ENCODE measurements at regions of chr1 and their contacts with region 1.

Region 1: DNA sequence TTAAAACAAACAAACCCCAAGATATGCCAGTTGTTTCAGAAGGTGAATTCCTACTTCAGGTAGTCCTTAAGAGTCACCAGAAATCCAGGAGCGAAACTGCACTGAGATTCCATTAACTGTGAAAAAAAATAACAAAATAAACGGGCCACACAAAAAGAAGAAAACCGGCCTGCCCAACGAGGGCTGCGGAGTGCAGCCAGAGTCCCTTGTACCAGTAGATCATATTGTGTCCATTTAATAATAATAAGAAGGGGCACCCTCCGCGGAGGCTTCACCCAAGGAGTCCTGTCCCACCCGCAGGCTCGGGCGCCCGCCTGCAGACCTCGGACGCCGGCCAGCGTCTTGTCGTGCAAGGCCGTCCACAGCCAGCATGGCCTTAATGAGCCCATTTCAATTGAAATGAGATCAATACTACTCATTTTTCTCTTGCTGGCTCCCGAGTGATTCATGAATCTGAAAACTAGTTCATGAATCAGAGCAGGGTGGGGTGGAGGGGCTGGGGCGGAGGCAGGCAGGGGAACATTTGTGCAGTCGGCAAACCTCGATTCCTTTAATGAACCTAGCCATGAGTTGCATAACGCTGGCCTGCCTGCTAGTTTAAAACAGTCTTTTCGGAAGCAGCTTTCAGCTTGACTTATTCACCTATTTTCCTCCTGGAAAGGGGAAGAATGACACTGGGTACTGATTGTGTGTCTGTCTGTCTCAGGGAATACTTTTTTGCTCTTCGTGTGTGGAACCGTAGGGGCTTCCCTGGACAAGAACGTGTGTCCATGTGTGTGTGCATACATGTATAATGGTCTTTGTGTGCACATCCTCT is 113.1 kb upstream of the IRF2BP2 start:
- DNase-seq: peak; percentile 89 to 91
- H3K4me3 ChIP-seq: peak overlapping the region in 1 of 2 donors; percentile 35
- H3K27ac ChIP-seq: peak overlapping the region; percentile 81 to 87
- H3K4me1 ChIP-seq: peaks cover 0 to 93% (median 82%) of the 10 kb centered on the region in 4 donors
- H3K27me3 ChIP-seq: no peaks in the 10 kb centered on the region
- CTCF ChIP-seq: no peak

Region 2: GRCh38 chr1:234533975-234534876 is 188.9 kb before region 1 on chr1:
- intact Hi-C with region 1: loop called (anchors 5 kb)
- DNase-seq: peak; percentile 99
- H3K4me3 ChIP-seq: no peak overlapping the region
- H3K27ac ChIP-seq: peak overlapping the region; percentile 98 to 99
- H3K4me1 ChIP-seq: peaks cover 16 to 99% (median 89%) of the 10 kb centered on the region in 4 donors
- H3K27me3 ChIP-seq: no peaks in the 10 kb centered on the region
- CTCF ChIP-seq: no peak

Region 3: DNA sequence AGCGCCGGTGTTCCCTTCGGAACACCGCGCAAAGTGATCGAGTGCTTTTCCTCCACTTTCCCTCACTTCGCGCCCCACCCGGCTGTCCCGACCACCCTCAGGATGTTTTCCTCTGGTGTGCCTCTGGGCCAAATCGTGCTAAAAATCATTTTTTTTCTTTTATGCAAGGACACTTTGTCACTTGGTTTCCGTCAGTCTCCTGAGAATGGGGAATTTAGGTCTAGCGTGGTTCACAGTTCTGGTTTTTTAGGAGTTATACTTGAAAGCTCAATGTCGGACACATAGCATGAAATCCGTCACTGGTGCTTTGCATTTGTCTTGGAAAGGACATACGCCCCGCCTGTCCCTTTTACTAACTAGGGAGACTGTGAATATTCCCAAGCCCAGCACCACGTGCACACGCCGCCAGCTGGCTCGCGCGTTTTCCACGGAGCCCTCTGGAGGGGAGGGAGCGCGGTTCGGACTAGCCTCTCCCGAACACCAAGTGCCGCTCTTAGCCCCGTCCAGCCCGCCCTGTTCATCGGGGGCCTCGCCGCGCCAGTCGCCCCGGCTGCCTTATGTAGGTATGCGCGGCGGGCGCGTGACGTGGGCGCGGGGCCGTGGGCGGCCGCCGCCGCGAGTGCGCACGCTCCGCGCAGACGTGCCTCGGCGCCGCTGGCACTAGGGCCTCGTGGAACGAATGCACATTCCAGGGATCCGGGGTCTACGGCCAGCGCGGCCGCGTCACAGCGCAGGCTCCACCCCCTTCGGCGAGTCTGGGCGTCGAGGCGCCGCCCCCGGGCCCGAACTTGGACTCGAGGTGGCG is 112.6 kb before region 1 on chr1:
- intact Hi-C with region 1: loop called (anchors 5 kb)
- DNase-seq: peak; percentile 91 to 98
- H3K4me3 ChIP-seq: peak overlapping the region; percentile 62 to 94
- H3K27ac ChIP-seq: peak overlapping the region; percentile 96 to 98
- H3K4me1 ChIP-seq: peaks cover 0 to 46% (median 29%) of the 10 kb centered on the region in 4 donors
- H3K27me3 ChIP-seq: no peaks in the 10 kb centered on the region
- CTCF ChIP-seq: peak; percentile 6 to 13

Region 4: GRCh38 chr1:234676103-234676594 is 47.0 kb before region 1 on chr1:
- intact Hi-C with region 1: no loop called
- DNase-seq: peak; percentile 80 to 86
- H3K4me3 ChIP-seq: peak overlapping the region; percentile 34 to 44
- H3K27ac ChIP-seq: peak overlapping the region; percentile 54 to 55
- H3K4me1 ChIP-seq: peaks cover 0 to 10% (median 0%) of the 10 kb centered on the region in 4 donors
- H3K27me3 ChIP-seq: no peaks in the 10 kb centered on the region
- CTCF ChIP-seq: no peak

Region 5: GRCh38 chr1:234772345-234773147 is 49.4 kb after region 1 on chr1:
- intact Hi-C with region 1: no loop called
- DNase-seq: peak; percentile 69 to 85
- H3K4me3 ChIP-seq: peak overlapping the region; percentile 25 to 31
- H3K27ac ChIP-seq: peak overlapping the region; percentile 31 to 62
- H3K4me1 ChIP-seq: peaks cover 0 to 23% (median 7%) of the 10 kb centered on the region in 4 donors
- H3K27me3 ChIP-seq: peaks cover 0 to 13% of the 10 kb centered on the region in 2 donors
- CTCF ChIP-seq: no peak

Region 6: GRCh38 chr1:234918181-234918841 is 195.2 kb after region 1 on chr1:
- intact Hi-C with region 1: loop called (anchors 5 kb)
- DNase-seq: peak in 1 of 2 donors; percentile 74
- H3K4me3 ChIP-seq: no peak overlapping the region
- H3K27ac ChIP-seq: peak overlapping the region; percentile 80 to 85
- H3K4me1 ChIP-seq: peaks cover 10 to 87% (median 76%) of the 10 kb centered on the region in 4 donors
- H3K27me3 ChIP-seq: no peaks in the 10 kb centered on the region
- CTCF ChIP-seq: no peak

Region 7: GRCh38 chr1:234997201-234997895 is 274.2 kb after region 1 on chr1:
- intact Hi-C with region 1: loop called (anchors 5 kb)
- DNase-seq: peak; percentile 100
- H3K4me3 ChIP-seq: peak overlapping the region in 1 of 2 donors; percentile 11
- H3K27ac ChIP-seq: peak overlapping the region; percentile 83 to 86
- H3K4me1 ChIP-seq: peaks cover 0 to 28% (median 25%) of the 10 kb centered on the region in 4 donors
- H3K27me3 ChIP-seq: no peaks in the 10 kb centered on the region
- CTCF ChIP-seq: no peak

Region 8: GRCh38 chr1:235079443-235080296 is 356.6 kb after region 1 on chr1:
- intact Hi-C with region 1: loop called (anchors 5 kb)
- DNase-seq: no peak
- H3K4me3 ChIP-seq: no peak overlapping the region
- H3K27ac ChIP-seq: peak overlapping the region; percentile 14 to 47
- H3K4me1 ChIP-seq: peaks cover 0 to 71% (median 58%) of the 10 kb centered on the region in 4 donors
- H3K27me3 ChIP-seq: no peaks in the 10 kb centered on the region
- CTCF ChIP-seq: no peak